ENCODE measurements at regions of chr6 and their contacts with region 1.

Region 1: DNA sequence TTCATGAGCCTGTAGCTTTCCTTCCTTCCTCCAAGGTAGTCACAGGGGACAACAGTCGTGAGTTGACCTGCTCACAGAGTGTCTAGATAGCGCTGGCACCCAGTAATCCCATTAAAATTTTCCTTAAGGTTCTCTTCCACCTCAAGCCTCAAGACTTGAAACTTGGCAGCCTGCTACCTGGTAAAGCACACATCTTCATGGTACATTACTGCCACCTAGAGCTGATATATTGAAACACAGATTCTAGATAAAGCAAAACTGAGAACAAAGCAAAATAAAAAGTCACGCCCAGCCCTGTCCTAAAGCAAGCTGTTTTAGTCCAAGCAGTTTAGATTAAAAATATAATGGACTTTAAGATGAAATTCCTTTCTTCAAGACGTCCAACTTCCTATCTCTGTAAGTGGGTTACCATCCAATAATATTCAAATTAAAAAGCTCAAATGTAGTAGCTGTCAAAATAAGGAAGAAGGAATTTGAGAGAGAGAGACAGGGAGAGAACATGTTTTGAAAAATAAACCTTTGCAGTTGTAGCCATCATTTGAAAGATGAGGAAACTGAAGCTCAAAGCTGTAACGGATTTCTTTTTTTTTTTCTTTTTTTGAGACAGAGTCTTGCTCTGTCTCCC is 50.7 kb upstream of the CD83 start:
- DNase-seq: peak in 1 of 10 donors; percentile 28
- H3K4me3 ChIP-seq: no peak overlapping the region
- H3K27ac ChIP-seq: no peak overlapping the region
- H3K27me3 ChIP-seq: peaks cover 0 to 9% (median 0%) of the 10 kb centered on the region in 45 donors
- CTCF ChIP-seq: peak; percentile 34 to 89 (median 69)

Region 2: DNA sequence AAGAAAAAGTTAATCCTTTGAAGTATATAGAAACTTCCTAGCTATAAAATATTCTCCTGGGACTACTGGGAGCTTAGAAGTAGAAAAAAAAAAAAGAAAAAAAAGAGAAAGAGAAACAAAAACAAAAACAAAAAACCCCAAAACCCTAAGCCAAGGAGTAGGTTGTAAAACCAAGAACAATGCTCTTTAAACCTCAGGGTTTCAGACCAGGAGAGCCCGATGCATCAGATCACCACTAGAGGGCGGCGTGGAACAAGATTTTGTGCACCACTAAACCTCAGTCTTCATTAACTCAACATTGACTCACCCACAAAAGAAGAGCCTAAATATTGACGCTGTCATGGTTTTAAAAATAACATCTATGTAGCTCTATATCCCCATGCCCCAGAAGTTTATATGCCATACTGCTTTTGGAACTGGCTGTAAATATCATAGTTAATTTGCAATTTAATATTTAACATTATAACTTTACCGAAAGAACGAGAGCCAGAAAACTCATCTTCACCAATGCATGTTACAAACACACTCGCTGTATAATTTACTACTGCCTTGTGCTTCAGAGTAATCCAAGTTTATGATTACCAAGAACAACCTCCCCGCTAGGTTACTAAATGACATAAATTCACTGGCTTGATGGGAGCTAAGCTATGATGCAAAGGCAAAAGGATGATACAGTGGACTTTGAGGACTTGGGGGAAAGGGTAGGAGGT is 271.7 kb before region 1 on chr6:
- intact Hi-C with region 1: loop called (anchors 2 to 10 kb)
- DNase-seq: peak; percentile 67 to 90 (median 82)
- H3K4me3 ChIP-seq: peak overlapping the region in 3 of 59 donors; percentile 1 to 8 (median 8)
- H3K27ac ChIP-seq: peak overlapping the region in 1 of 59 donors; percentile 17
- H3K27me3 ChIP-seq: no peaks in the 10 kb centered on the region
- CTCF ChIP-seq: peak; percentile 68 to 98 (median 93)

Region 3: DNA sequence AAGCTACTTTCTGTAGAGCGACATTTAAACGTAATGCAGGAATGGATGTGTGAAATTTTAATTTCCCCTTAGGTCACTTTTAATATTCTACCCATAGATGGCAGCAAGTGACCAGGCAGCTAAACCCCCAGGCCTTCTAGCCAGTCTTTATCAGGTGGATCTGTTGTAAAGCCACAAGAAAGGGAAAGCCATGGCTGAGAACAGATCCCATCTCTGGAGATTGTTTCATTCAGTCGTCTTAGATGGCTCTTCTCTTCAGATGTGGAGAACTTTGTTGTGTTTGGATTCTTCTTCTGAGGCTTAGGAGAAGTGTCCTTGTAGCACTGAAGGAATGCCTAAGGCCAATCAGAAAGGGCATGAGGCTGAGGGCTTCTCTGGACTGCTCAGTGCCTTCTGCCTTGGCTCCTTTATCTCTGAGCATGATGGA is 157.9 kb before region 1 on chr6:
- intact Hi-C with region 1: loop called (anchors 2 to 10 kb)
- DNase-seq: peak in 5 of 10 donors; percentile 25 to 59 (median 39)
- H3K4me3 ChIP-seq: no peak overlapping the region
- H3K27ac ChIP-seq: no peak overlapping the region
- H3K27me3 ChIP-seq: peaks cover 0 to 17% (median 0%) of the 10 kb centered on the region in 45 donors
- CTCF ChIP-seq: peak; percentile 38 to 91 (median 78)

Region 4: DNA sequence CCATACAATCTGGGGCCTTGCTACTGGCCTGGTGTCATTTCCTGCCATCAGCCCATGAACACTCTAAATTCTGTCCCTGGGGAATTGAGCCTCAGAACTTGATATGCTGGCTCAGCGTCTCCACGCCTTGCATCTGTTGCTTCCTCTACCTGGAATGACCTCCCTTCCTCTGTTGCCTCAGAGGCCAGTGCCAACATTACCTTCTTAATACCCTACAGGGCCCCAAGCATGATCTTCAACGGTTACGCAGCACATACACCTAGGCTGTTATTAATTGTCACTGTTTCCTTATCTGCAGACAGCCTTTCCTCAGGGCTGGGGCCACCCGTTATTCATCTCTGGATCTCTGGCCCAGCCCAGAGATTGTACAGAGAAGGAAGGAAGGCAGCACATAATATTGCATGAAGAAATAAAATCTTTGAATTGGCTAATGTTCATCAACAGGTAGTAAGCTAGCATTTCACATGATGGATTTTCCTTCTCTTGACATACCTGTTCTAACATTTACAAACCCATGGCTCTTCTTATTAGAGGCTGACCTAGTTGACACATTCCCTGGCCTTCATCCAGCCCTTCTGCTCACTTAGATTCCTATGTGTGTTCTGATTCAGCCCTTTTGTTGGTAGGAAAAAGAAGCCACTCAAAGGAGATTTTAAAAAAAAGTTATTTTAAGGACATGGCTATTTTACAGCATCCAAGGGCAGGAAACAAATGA is 150.5 kb before region 1 on chr6:
- intact Hi-C with region 1: loop called in 1 of 2 experiments (anchors 10 kb)
- DNase-seq: peak in 1 of 10 donors; percentile 77
- H3K4me3 ChIP-seq: no peak overlapping the region
- H3K27ac ChIP-seq: peak overlapping the region in 1 of 59 donors; percentile 58
- H3K27me3 ChIP-seq: peaks cover 0 to 30% (median 0%) of the 10 kb centered on the region in 45 donors
- CTCF ChIP-seq: no peak